Activated T-helper 1 cell treated with anti-CD3 and anti-CD28 coated beads, Interleukin-12 subunit alpha, Interleukin-12 subunit beta, Interleukin-2, Interleukin-4 antibody, amounts not matched to agents 30 ng/mL and 10 ng/mL and 1 ng/mL, durations not matched to agents 14 hours and 24 hours and 36 hours (primary cell): ENCODE measurements at regions of chr11 and their contacts with region 1.

Region 1: GRCh38 chr11:77047007-77047927 is 13.1 kb downstream of the B3GNT6 start:
- DNase-seq: peak; percentile 72
- H3K4me3 Mint-ChIP-seq: peak overlapping the region; percentile 30
- H3K27ac Mint-ChIP-seq: peak overlapping the region; percentile 2
- H3K4me1 Mint-ChIP-seq: peaks cover 14% of the 10 kb centered on the region
- H3K27me3 Mint-ChIP-seq: peaks cover 9% of the 10 kb centered on the region

Region 2: DNA sequence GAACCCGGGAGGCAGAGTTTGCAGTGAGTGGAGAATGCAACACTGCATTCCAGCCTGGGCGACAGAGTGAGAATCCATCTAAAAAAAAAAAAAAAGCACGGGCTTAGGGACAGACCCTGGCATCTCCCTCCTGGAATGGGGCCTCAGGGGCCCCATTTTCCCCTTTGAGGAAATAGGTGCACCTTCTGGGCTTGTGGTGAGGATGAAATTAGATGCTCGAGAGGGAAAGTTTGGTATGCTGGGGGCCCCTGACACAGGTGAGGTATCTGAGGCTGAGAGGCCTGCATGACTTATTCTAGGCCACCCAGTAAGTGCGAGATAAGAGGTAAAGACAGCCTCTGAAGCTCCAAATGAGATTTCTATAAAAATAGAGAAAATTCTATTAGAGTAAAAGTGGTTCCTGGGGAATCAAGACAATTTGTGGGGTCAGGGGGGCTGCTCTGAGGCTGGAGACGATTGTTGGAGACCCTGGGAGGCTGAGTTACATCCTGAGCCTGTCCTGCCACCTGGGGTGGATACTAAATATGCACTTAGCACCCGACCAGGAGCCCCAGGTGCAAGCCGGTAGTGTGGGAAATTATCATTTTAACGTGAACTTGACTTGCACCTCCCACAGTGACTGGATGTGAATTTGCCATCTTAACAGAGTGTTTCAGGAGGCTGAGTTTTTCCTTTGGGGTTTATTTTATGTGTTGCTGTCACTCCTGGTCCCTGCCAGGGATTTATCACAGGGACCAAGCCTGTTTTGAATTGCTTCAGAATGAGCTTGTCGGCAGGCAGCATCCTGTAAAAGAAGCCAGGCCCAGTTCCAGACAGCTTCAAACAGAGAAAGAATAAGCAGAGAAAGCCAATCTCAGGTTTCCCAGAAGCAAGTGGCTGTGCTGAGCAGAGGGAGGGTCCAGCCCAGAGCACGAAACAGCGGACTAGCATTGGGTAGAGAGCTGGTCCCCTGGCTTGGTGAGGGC is 312.5 kb before region 1 on chr11:
- intact Hi-C with region 1: loop called (anchors 2 kb)
- DNase-seq: no peak
- H3K4me3 Mint-ChIP-seq: no peak overlapping the region
- H3K27ac Mint-ChIP-seq: no peak overlapping the region
- H3K4me1 Mint-ChIP-seq: no peaks in the 10 kb centered on the region
- H3K27me3 Mint-ChIP-seq: peaks cover 9% of the 10 kb centered on the region

Region 3: GRCh38 chr11:76860539-76861475 is 186.5 kb before region 1 on chr11 and contains the start of gene ACER3:
- intact Hi-C with region 1: loop called (anchors 1 kb)
- DNase-seq: peak; percentile 87
- H3K4me3 Mint-ChIP-seq: peak within 1 kb of the TSS; percentile 90
- H3K27ac Mint-ChIP-seq: peak within 1 kb of the TSS; percentile 73
- H3K4me1 Mint-ChIP-seq: peaks cover 33% of the 10 kb centered on the region
- H3K27me3 Mint-ChIP-seq: peaks cover 2% of the 10 kb centered on the region
- total RNA-seq, gene ACER3: 9.9 and 12.2 TPM in 2 replicates

Region 4: DNA sequence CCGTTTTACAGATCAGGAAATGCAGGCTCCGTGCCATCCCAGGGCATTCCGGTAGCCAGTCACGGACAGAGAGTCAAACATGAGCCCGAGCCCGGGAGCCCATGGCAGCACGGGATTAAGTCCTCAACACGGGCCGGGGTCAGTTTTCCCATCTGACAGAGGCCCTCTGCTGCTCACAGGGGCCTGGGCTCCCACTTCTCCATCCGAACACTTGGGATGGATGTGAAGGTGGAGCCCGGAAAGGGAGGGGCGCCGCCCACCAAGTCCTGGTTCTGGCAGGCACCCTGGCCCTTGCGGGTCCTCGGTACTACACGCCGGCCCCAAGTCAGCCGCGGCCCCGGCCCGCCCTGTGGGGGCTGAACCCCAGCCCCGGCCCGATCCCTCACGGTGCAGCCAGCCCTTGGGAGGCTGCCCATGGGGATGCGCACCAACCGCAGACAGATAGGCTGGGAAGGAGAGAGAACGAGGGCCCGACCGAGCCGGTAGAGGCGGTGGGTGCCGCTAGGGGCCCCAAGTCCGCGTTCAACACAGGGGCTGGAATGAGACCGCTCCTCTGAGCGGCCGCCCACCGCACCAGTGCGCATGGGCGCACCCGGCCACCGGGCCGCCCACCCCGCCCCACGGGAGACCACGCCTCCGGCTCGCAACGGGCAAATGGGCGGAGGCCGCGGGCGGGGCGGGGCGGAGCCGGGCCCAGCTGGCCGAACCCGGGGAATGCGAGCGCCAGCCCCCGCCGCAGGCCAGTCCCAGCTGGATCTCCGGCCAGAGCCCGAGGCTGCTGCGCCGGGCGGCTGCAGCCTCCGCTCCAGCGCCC is 19.2 kb after region 1 on chr11 and contains the start of gene CAPN5:
- intact Hi-C with region 1: loop called (anchors 1 kb)
- DNase-seq: peak; percentile 80
- H3K4me3 Mint-ChIP-seq: peak within 1 kb of the TSS; percentile 86
- H3K27ac Mint-ChIP-seq: no peak within 1 kb of the TSS
- H3K4me1 Mint-ChIP-seq: no peaks in the 10 kb centered on the region
- H3K27me3 Mint-ChIP-seq: peaks cover 27% of the 10 kb centered on the region
- total RNA-seq, gene CAPN5: 0.10 and 0.32 TPM in 2 replicates

Region 5: GRCh38 chr11:77113382-77114088 is 66.3 kb after region 1 on chr11:
- intact Hi-C with region 1: loop called (anchors 1 kb)
- DNase-seq: no peak
- H3K4me3 Mint-ChIP-seq: no peak overlapping the region
- H3K27ac Mint-ChIP-seq: no peak overlapping the region
- H3K4me1 Mint-ChIP-seq: peaks cover 5% of the 10 kb centered on the region
- H3K27me3 Mint-ChIP-seq: no peaks in the 10 kb centered on the region

Region 6: DNA sequence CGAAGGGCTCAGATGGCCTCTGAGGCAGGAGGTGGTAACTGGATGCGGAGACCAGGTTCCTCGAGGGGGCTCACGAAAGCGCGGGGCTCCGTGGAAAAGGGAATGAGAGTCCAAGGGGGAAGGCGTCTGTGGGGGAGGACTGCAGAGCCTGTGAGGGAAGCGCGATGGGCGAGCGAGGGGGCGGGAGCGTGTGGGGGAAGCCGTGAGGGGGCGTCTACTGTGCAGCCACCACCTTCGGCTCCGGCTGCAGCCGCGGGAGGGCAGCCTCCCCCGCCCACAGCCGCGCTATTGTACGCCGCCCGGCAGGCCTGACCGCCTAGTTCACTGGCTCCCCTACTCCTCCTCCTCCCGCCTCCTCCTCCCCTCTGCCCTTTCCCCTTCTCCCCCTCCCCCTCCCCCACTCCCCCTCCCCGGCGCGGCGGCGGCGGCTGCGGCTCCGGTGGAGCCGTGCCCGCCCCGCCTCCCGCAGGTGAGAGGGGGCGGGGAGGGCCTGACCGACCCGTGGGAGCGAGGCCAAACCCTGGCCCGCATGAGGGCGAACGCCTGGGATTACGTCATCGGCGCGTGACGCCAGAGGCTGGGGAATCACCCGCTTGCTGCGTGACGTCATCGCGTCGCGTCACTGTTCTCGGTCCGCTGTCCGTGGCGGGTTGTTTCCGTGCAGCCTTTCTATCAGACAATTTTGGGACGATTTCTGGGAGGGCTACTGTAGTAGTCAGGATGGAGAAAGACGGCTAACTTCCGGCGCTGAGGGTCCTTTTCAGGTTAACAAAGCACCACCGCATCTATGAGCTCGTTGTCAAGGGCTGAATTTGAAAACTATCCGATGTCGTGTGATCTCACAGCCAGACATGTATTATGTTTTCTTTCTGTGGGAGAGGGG is 426.8 kb after region 1 on chr11 and contains the start of gene PAK1:
- intact Hi-C with region 1: loop called (anchors 2 kb)
- DNase-seq: peak; percentile 81
- H3K4me3 Mint-ChIP-seq: peak within 1 kb of the TSS; percentile 79
- H3K27ac Mint-ChIP-seq: peak within 1 kb of the TSS; percentile 74
- H3K4me1 Mint-ChIP-seq: peaks cover 27% of the 10 kb centered on the region
- H3K27me3 Mint-ChIP-seq: peaks cover 25% of the 10 kb centered on the region
- total RNA-seq, gene PAK1: 33.1 and 38.4 TPM in 2 replicates